ENCODE measurements at regions of chr15 and their contacts with region 1.

Region 1: DNA sequence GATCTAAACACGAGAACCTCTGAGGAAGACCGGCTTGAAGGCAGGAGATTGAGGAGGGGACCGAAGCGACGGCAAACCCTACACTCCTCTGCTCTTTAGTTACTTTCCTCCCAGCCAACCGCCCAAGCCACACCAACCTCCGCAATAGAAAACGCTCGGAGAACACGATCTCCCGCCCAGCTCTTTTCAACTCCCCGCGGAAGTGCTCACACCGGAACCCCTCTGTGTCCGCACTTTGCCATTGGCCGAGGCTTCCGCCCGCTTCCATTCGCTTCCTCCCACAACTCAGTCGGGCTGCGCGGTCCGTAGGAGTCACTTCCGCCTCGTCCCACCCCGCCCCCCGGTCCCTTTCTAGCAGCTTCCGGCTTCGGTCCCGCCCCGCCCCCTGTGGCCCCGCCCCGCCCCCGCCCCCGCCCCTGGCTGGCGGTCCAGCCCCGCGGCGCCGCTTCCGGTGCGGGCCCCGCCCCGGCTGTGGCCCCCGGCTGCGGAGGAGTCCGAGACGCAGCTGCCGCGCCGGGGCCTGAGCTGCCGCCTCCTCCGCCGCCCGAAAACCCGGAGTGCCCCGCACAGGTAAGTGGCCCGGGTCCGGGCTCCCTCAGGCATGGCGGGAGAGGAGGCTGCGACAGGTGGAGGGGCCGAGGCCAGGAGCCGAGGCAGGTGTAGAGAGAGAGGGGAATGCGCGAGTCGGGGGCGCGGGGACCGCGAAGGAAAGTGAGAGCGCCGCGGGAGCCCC is at the start of gene ARID3B:
- DNase-seq: peak; percentile 90 to 98 (median 94)
- ATAC-seq: peak; percentile 82
- H3K4me3 ChIP-seq: peak within 1 kb of the TSS; percentile 100
- H3K4me3 Mint-ChIP-seq: peak within 1 kb of the TSS; percentile 95
- H3K27ac ChIP-seq: peak within 1 kb of the TSS; percentile 82 to 85
- H3K27ac Mint-ChIP-seq: peak within 1 kb of the TSS; percentile 91
- H3K4me1 ChIP-seq: peaks cover 44% of the 10 kb centered on the region
- H3K4me1 Mint-ChIP-seq: peaks cover 52% of the 10 kb centered on the region
- H3K27me3 ChIP-seq: no peaks in the 10 kb centered on the region
- H3K27me3 Mint-ChIP-seq: no peaks in the 10 kb centered on the region
- CTCF ChIP-seq: no peak
- total RNA-seq, gene ARID3B: 25.0 to 27.9 TPM

Region 2: DNA sequence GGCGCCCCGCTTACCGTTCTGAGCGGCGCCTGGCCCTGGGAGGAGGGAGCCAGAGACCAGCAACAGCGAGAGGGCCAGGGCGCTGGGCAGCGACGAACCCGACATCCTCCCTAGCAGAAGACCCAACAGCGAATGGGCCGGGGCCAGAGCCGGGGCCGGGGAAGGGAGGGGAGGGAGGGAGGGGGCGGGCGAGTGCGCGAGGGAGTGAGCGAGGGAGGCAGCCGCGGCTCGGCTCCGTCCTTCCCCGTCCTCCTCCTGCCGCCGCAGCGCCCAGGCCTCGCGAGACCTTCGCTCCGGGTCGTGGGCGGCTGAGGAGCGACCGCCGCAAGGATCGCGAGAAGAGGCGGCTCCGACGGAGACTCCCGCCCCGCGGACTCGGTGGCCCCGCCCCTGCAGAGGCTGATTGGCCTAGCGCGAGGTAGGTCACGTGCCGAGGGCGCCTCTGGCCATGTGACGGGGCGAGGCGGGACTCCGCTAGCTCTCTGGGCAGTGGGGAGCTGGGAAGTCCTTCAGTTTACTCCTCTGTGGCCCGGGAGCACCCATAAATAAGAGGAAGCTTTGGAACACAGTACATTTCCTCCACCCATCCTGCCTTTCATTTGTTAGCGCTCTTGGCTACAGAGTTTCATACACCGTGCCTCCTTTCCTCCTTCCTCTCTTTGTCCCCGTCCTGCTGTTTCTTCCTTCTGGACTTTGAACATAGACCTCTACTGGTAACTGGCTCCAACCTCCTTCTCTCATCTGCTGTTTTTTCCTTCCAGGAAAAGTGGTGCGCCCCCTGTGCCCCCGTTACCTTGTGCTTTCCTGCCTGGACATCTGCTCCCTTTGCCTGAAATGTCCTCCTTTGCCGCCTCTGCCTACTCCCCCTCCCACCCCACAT is 907.6 kb before region 1 on chr15 and contains the start of gene NPTN:
- CTCF ChIA-PET with region 1: no interaction called
- POLR2A ChIA-PET with region 1: no interaction called
- intact Hi-C with region 1: loop called in 1 of 2 experiments (anchors 10 kb)
- DNase-seq: peak; percentile 94 to 99 (median 98)
- ATAC-seq: peak; percentile 89
- H3K4me3 ChIP-seq: peak within 1 kb of the TSS; percentile 86
- H3K4me3 Mint-ChIP-seq: peak within 1 kb of the TSS; percentile 93
- H3K27ac ChIP-seq: peak within 1 kb of the TSS; percentile 8 to 62
- H3K27ac Mint-ChIP-seq: peak within 1 kb of the TSS; percentile 60
- H3K4me1 ChIP-seq: peaks cover 24% of the 10 kb centered on the region
- H3K4me1 Mint-ChIP-seq: peaks cover 54% of the 10 kb centered on the region
- H3K27me3 ChIP-seq: no peaks in the 10 kb centered on the region
- H3K27me3 Mint-ChIP-seq: peaks cover 9% of the 10 kb centered on the region
- CTCF ChIP-seq: no peak
- total RNA-seq, gene NPTN: 9.3 to 13.5 TPM

Region 3: DNA sequence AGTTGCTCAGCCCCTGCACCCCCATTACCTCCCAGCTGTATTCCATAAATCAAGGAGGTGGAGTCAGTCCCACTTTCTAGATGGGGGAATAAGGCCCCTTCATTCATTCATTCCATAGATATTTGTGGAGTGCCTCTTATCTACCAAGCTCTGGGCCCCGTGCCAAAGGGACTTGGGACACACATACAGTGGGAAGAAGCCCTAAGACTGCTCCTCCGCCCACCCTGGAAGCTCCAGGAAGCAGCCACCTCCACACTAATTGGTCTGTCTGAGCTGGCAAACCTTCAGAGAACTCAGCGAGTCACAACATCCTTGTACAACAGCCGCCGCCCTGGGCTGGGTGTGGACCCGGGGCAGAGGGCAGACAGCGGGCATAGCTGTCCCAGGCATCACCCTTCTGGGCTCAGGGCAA is 344.7 kb before region 1 on chr15:
- CTCF ChIA-PET with region 1: no interaction called
- POLR2A ChIA-PET with region 1: no interaction called
- intact Hi-C with region 1: no loop called
- DNase-seq: no peak
- ATAC-seq: no peak
- H3K4me3 ChIP-seq: no peak overlapping the region
- H3K4me3 Mint-ChIP-seq: no peak overlapping the region
- H3K27ac ChIP-seq: no peak overlapping the region
- H3K27ac Mint-ChIP-seq: no peak overlapping the region
- H3K4me1 ChIP-seq: no peaks in the 10 kb centered on the region
- H3K4me1 Mint-ChIP-seq: no peaks in the 10 kb centered on the region
- H3K27me3 ChIP-seq: no peaks in the 10 kb centered on the region
- H3K27me3 Mint-ChIP-seq: peaks cover 4% of the 10 kb centered on the region
- CTCF ChIP-seq: no peak

Region 4: DNA sequence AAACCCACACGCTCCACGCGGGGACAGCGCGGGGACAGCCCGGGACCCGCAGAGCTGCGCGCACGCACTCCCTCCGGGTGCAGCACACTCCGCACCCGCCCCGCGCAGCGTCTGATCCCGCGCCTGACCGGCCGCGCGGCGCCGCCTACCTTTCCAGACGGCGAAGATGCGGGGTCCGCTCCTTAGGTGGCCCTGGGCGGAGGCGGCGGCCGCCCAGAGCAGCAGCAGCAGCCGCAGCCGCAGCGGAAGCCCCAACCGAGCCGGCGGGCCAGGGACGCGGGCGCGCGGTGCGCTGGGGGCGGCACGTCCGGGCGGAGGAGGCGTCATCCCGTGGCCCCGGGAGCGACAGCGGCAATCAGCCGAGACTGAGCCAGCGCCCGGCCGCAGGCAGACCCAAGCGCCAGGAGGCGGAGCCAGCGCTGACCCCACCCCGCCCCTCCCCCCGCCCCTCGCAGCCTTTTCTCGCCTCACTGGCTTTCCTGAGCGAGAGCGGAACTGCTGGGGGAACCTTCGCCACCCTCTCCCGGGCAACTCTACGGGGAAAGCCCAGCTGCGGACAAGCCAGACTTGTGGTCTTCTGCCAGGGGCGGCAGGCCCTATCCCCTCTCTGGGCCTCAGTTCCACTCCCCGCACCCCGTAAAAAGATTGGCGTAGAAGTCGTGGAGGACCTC is 107.2 kb before region 1 on chr15 and contains the start of gene SEMA7A:
- CTCF ChIA-PET with region 1: no interaction called
- POLR2A ChIA-PET with region 1: no interaction called
- intact Hi-C with region 1: no loop called
- DNase-seq: peak; percentile 35 to 93 (median 67)
- ATAC-seq: peak; percentile 77
- H3K4me3 ChIP-seq: peak within 1 kb of the TSS; percentile 53
- H3K4me3 Mint-ChIP-seq: peak within 1 kb of the TSS; percentile 85
- H3K27ac ChIP-seq: no peak within 1 kb of the TSS
- H3K27ac Mint-ChIP-seq: peak within 1 kb of the TSS; percentile 39
- H3K4me1 ChIP-seq: peaks cover 23% of the 10 kb centered on the region
- H3K4me1 Mint-ChIP-seq: peaks cover 16% of the 10 kb centered on the region
- H3K27me3 ChIP-seq: no peaks in the 10 kb centered on the region
- H3K27me3 Mint-ChIP-seq: no peaks in the 10 kb centered on the region
- CTCF ChIP-seq: no peak
- total RNA-seq, gene SEMA7A: 2.3 to 2.7 TPM

Region 5: DNA sequence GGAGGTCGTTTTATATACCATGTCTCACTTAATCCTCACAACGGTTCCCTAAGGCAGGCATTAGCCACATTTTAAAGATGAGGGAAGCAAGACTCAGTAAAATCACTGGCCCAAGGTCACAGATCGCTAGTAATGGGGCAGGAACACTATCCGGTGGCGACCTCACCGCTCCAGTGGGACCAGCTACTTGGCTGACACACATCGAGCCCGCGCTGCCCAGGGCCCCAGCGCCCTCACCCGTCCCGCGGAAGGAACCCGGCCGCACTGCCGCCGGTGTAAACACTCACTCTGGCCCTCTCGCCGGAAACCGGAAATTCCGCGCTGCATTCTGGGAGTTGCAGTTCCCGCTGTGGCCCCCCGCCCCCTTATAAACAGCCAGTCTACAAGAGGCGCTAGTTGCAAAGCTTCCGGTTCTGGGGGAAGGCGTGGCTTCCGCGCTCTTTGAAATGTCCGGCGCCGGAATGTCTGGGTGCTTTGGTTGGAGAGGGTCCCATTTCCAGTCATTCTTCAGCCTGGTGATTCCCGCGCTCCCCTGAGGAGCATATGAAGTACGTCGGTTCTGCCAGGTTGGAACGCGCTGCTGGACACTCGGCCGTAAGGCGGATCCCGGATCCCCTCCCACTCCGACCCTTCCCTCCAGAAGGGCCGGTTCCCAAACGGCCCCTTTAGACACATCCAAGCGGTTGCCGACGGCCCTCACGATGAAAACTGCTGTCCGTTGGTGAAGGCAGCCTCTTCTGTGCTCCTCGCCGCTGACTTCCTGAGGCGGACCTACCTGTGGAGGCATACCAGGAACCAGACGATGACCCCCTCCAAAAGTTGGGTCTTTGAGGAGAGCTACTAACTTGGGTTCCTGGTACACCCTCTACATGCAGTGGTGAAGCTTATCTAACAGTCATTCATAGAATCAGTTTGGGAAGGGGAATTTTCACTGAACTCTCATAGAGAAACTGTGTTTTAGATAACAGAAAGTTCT is 79.8 kb before region 1 on chr15 and contains the start of gene UBL7:
- CTCF ChIA-PET with region 1: interaction called, 7 read pairs
- POLR2A ChIA-PET with region 1: interaction called, 11 read pairs
- intact Hi-C with region 1: loop called (anchors 1 kb)
- DNase-seq: peak; percentile 91 to 97 (median 96)
- ATAC-seq: peak; percentile 98
- H3K4me3 ChIP-seq: peak within 1 kb of the TSS; percentile 92
- H3K4me3 Mint-ChIP-seq: peak within 1 kb of the TSS; percentile 97
- H3K27ac ChIP-seq: peak within 1 kb of the TSS; percentile 61 to 62
- H3K27ac Mint-ChIP-seq: peak within 1 kb of the TSS; percentile 84
- H3K4me1 ChIP-seq: peaks cover 19% of the 10 kb centered on the region
- H3K4me1 Mint-ChIP-seq: peaks cover 53% of the 10 kb centered on the region
- H3K27me3 ChIP-seq: no peaks in the 10 kb centered on the region
- H3K27me3 Mint-ChIP-seq: no peaks in the 10 kb centered on the region
- CTCF ChIP-seq: peak; percentile 15
- total RNA-seq, gene UBL7: 14.3 to 17.1 TPM

Region 6: GRCh38 chr15:74525946-74526345 is 15.0 kb before region 1 on chr15:
- CTCF ChIA-PET with region 1: no interaction called
- POLR2A ChIA-PET with region 1: no interaction called
- intact Hi-C with region 1: no loop called
- DNase-seq: no peak
- ATAC-seq: no peak
- H3K4me3 ChIP-seq: no peak overlapping the region
- H3K4me3 Mint-ChIP-seq: no peak overlapping the region
- H3K27ac ChIP-seq: no peak overlapping the region
- H3K27ac Mint-ChIP-seq: no peak overlapping the region
- H3K4me1 ChIP-seq: no peaks in the 10 kb centered on the region
- H3K4me1 Mint-ChIP-seq: no peaks in the 10 kb centered on the region
- H3K27me3 ChIP-seq: no peaks in the 10 kb centered on the region
- H3K27me3 Mint-ChIP-seq: no peaks in the 10 kb centered on the region
- CTCF ChIP-seq: no peak

Region 7: GRCh38 chr15:74598126-74598842 is 57.4 kb after region 1 on chr15:
- CTCF ChIA-PET with region 1: no interaction called
- POLR2A ChIA-PET with region 1: interaction called, 7 read pairs
- intact Hi-C with region 1: loop called (anchors 2 to 5 kb)
- DNase-seq: peak; percentile 67 to 91 (median 82)
- ATAC-seq: peak; percentile 97
- H3K4me3 ChIP-seq: peak overlapping the region; percentile 65
- H3K4me3 Mint-ChIP-seq: peak overlapping the region; percentile 99
- H3K27ac ChIP-seq: peak overlapping the region; percentile 66 to 76
- H3K27ac Mint-ChIP-seq: peak overlapping the region; percentile 94
- H3K4me1 ChIP-seq: peaks cover 19% of the 10 kb centered on the region
- H3K4me1 Mint-ChIP-seq: peaks cover 20% of the 10 kb centered on the region
- H3K27me3 ChIP-seq: no peaks in the 10 kb centered on the region
- H3K27me3 Mint-ChIP-seq: no peaks in the 10 kb centered on the region
- CTCF ChIP-seq: no peak

Region 8: GRCh38 chr15:74781431-74782258 is 240.7 kb after region 1 on chr15 and contains the start of gene CSK:
- CTCF ChIA-PET with region 1: no interaction called
- POLR2A ChIA-PET with region 1: no interaction called
- intact Hi-C with region 1: loop called in 1 of 2 experiments (anchors 10 kb)
- DNase-seq: peak; percentile 59 to 94 (median 80)
- ATAC-seq: peak; percentile 59
- H3K4me3 ChIP-seq: peak within 1 kb of the TSS; percentile 100
- H3K4me3 Mint-ChIP-seq: peak within 1 kb of the TSS; percentile 90
- H3K27ac ChIP-seq: peak within 1 kb of the TSS; percentile 84 to 93
- H3K27ac Mint-ChIP-seq: peak within 1 kb of the TSS; percentile 94
- H3K4me1 ChIP-seq: peaks cover 88% of the 10 kb centered on the region
- H3K4me1 Mint-ChIP-seq: peaks cover 65% of the 10 kb centered on the region
- H3K27me3 ChIP-seq: no peaks in the 10 kb centered on the region
- H3K27me3 Mint-ChIP-seq: no peaks in the 10 kb centered on the region
- CTCF ChIP-seq: peak; percentile 59
- total RNA-seq, gene CSK: 114 to 118 TPM

Region 9: GRCh38 chr15:75367913-75368688 is 827.2 kb after region 1 on chr15 and contains the start of gene MAN2C1:
- CTCF ChIA-PET with region 1: no interaction called
- POLR2A ChIA-PET with region 1: interaction called, 5 read pairs
- intact Hi-C with region 1: loop called in 1 of 2 experiments (anchors 5 kb)
- DNase-seq: peak; percentile 80 to 97 (median 88)
- ATAC-seq: peak; percentile 95
- H3K4me3 ChIP-seq: peak within 1 kb of the TSS; percentile 91
- H3K4me3 Mint-ChIP-seq: peak within 1 kb of the TSS; percentile 94
- H3K27ac ChIP-seq: peak within 1 kb of the TSS; percentile 93 to 96
- H3K27ac Mint-ChIP-seq: peak within 1 kb of the TSS; percentile 94
- H3K4me1 ChIP-seq: peaks cover 32% of the 10 kb centered on the region
- H3K4me1 Mint-ChIP-seq: peaks cover 30% of the 10 kb centered on the region
- H3K27me3 ChIP-seq: no peaks in the 10 kb centered on the region
- H3K27me3 Mint-ChIP-seq: no peaks in the 10 kb centered on the region
- CTCF ChIP-seq: peak; percentile 59
- total RNA-seq, gene MAN2C1: 519 to 546 TPM

Measured in CD4-positive, alpha-beta T cell (primary cell).